Activated naive CD4-positive, alpha-beta T cell treated with anti-CD3 and anti-CD28 coated beads for 36 hours (primary cell): ENCODE measurements at regions of chr14 and their contacts with region 1.

Region 1: DNA sequence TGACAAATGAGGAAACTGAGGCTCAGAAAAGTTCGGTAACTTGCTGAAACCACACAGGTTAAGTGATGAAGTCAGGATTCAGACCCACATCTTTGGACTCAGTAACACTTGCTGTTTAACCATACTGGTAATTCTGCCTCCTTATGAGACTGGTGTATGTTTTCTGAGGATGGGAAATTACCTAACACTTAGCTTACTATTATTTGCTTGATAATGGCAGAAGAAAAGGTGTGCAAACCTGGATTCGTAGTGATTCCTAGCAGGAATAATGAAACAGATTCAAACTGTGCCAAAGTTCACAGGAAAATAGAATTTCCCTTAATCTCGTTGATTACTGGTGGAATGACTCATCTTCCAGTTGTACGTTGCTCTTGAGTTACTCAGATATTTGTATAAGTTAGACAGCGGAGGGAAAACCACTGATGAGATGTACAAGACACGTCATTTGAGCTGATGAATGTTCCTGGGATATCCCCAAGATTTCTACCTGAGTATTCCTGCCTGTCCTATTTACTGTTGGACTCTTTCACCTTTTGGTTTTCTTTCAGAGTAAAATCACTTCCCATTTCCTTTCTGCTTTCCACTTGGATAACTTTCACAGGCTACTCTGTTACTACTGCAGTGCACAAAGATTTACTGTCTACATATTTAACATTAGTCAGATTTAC is 37.5 kb downstream of the PRORP start:
- DNase-seq: no peak
- H3K4me3 Mint-ChIP-seq: no peak overlapping the region
- H3K27ac Mint-ChIP-seq: peak overlapping the region; percentile 32
- H3K4me1 Mint-ChIP-seq: peaks cover 52% of the 10 kb centered on the region
- H3K27me3 Mint-ChIP-seq: no peaks in the 10 kb centered on the region

Region 2: DNA sequence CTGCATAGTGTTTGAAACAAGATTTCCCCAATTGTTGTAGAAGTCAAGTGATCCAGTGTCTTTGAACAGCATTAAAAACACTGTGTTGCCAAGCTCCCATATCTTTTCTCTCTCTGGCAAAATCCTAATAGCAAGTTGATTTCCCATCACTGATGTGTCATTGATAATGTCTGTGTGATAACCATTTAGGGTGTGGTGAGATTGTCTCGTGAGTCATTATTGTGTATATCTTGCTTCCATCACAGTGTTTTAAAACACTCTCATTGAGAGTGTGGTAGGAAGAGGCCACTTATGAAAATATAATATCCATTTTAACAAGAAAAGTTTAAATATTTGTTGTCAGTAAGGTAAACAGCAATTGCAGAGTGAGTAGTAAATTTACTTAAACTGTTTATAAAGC is 37.1 kb after region 1 on chr14:
- CTCF ChIA-PET with region 1: no interaction called
- intact Hi-C with region 1: loop called (anchors 2 kb)
- DNase-seq: no peak
- H3K4me3 Mint-ChIP-seq: no peak overlapping the region
- H3K27ac Mint-ChIP-seq: no peak overlapping the region
- H3K4me1 Mint-ChIP-seq: peaks cover 30% of the 10 kb centered on the region
- H3K27me3 Mint-ChIP-seq: no peaks in the 10 kb centered on the region